Activated T-helper 1 cell treated with anti-CD3 and anti-CD28 coated beads, Interleukin-12 subunit alpha, Interleukin-12 subunit beta, Interleukin-2, Interleukin-4 antibody, amounts not matched to agents 30 ng/mL and 10 ng/mL and 1 ng/mL, durations not matched to agents 14 hours and 24 hours and 36 hours (primary cell): ENCODE measurements at regions of chr11 and their contacts with region 1.

Region 1: GRCh38 chr11:123454060-123454651 is 24.1 kb downstream of the GRAMD1B start:
- DNase-seq: peak; percentile 74
- H3K4me3 Mint-ChIP-seq: peak overlapping the region; percentile 82
- H3K27ac Mint-ChIP-seq: peak overlapping the region; percentile 97
- H3K4me1 Mint-ChIP-seq: peaks cover 98% of the 10 kb centered on the region
- H3K27me3 Mint-ChIP-seq: no peaks in the 10 kb centered on the region

Region 2: GRCh38 chr11:123429913-123430720 is 24.0 kb before region 1 on chr11 and contains the start of gene GRAMD1B:
- intact Hi-C with region 1: loop called (anchors 1 kb)
- DNase-seq: peak; percentile 78
- H3K4me3 Mint-ChIP-seq: peak within 1 kb of the TSS; percentile 91
- H3K27ac Mint-ChIP-seq: peak within 1 kb of the TSS; percentile 93
- H3K4me1 Mint-ChIP-seq: peaks cover 76% of the 10 kb centered on the region
- H3K27me3 Mint-ChIP-seq: no peaks in the 10 kb centered on the region
- total RNA-seq, gene GRAMD1B: 154 and 155 TPM in 2 replicates

Region 3: DNA sequence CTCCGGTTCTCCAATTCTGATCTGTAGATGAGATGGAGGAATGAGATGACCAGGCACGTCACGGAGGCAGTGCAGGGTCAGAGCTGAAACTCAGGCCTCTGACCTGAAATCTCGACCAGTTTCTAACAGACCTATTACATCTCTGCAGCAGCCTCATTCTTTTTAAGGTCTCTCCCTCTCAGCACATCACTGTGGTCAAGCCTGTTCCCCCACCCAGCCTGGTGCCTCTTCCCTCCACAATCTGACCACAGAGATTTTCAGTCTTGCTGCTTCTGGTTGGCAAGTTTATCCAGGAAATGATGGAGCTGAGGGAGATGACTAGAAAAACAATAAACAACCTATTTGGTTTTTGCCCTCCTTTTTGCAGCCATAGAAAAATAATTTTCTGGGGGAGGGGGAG is 14.5 kb before region 1 on chr11:
- intact Hi-C with region 1: loop called (anchors 1 kb)
- DNase-seq: no peak
- H3K4me3 Mint-ChIP-seq: peak overlapping the region; percentile 65
- H3K27ac Mint-ChIP-seq: peak overlapping the region; percentile 76
- H3K4me1 Mint-ChIP-seq: peaks cover 91% of the 10 kb centered on the region
- H3K27me3 Mint-ChIP-seq: no peaks in the 10 kb centered on the region

Region 4: DNA sequence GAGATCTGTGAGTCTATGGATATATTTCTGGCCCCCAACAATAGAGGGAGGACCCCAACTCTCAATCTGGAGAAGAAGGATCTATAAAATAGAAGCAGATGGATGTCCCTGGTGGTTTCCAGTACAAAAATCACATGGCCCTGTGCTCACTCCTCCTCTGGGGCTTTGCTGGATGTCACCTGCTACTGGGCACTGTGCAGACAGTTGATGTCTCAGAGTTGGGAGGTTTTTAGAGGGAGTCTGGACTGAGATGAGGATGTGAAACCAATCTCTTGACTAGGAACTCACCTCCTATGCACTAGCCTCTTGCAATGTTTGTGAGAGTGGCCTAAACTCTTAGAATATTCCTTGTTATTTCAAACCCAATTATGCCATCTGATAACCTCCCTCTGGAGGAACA is 93.0 kb after region 1 on chr11:
- intact Hi-C with region 1: no loop called
- DNase-seq: no peak
- H3K4me3 Mint-ChIP-seq: no peak overlapping the region
- H3K27ac Mint-ChIP-seq: no peak overlapping the region
- H3K4me1 Mint-ChIP-seq: peaks cover 54% of the 10 kb centered on the region
- H3K27me3 Mint-ChIP-seq: no peaks in the 10 kb centered on the region